GM12878 (cell line): ENCODE measurements at regions of chr11 and their contacts with region 1.

Region 1: GRCh38 chr11:96293598-96294021 is 49.4 kb downstream of the MAML2 start:
- DNase-seq: peak; percentile 69
- ATAC-seq: peak; percentile 91
- H3K4me3 ChIP-seq: peak overlapping the region; percentile 34; the same call in 1 of the 2 replicates
- H3K27ac ChIP-seq: peak overlapping the region; percentile 65
- H3K4me1 ChIP-seq: peaks cover 32% of the 10 kb centered on the region
- H3K27me3 ChIP-seq: no peaks in the 10 kb centered on the region
- CTCF ChIP-seq: no peak
- EP300 ChIP-seq: no peak; a peak in 1 of 4 replicates
- POLR2A ChIP-seq: no peak
- RAD21 ChIP-seq: no peak

Region 2: GRCh38 chr11:96307776-96308140 is 14.1 kb after region 1 on chr11:
- CTCF ChIA-PET with region 1: interaction called, 5 read pairs
- POLR2A ChIA-PET with region 1: interaction called, 3 read pairs
- RAD21 ChIA-PET with region 1: interaction called, 4 read pairs
- SMC1A ChIA-PET with region 1: interaction called, 16 read pairs
- in situ Hi-C with region 1: no loop called
- intact Hi-C with region 1: no loop called
- DNase-seq: no peak
- ATAC-seq: no peak
- H3K4me3 ChIP-seq: no peak overlapping the region
- H3K27ac ChIP-seq: no peak overlapping the region
- H3K4me1 ChIP-seq: no peaks in the 10 kb centered on the region
- H3K27me3 ChIP-seq: no peaks in the 10 kb centered on the region
- CTCF ChIP-seq: no peak
- EP300 ChIP-seq: no peak
- POLR2A ChIP-seq: no peak
- RAD21 ChIP-seq: no peak

Region 3: GRCh38 chr11:96506953-96507354 is 213.3 kb after region 1 on chr11:
- CTCF ChIA-PET with region 1: no interaction called
- POLR2A ChIA-PET with region 1: no interaction called
- RAD21 ChIA-PET with region 1: no interaction called
- SMC1A ChIA-PET with region 1: no interaction called
- in situ Hi-C with region 1: no loop called
- intact Hi-C with region 1: no loop called
- DNase-seq: no peak
- ATAC-seq: no peak
- H3K4me3 ChIP-seq: no peak overlapping the region
- H3K27ac ChIP-seq: no peak overlapping the region
- H3K4me1 ChIP-seq: no peaks in the 10 kb centered on the region
- H3K27me3 ChIP-seq: no peaks in the 10 kb centered on the region
- CTCF ChIP-seq: no peak
- EP300 ChIP-seq: no peak
- POLR2A ChIP-seq: no peak
- RAD21 ChIP-seq: no peak